ENCODE measurements at regions of chr2 and their contacts with region 1.

Region 1: DNA sequence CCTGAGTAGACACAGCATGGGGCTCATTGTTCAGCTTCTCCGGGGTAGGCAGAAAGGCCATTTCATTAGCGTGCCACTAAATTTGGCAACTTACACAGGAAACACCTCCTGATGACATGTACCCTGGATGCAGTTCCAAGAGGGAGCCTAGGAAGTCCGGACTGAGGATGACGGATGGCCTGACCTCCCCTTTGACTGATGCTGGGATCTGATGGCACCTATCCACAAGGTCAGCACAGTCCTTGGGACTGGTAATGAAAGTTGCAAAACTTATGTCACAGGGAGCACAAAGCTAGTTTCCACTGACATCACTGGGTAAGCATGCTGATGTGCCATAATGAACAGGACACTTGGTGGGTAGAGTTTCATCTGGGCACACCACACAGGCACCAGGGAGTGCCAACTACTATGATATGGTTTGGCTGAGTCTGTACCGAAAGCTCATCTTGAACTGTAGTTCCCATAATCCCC is 126.7 kb upstream of the ARL4C start:
- DNase-seq: no peak
- H3K4me3 ChIP-seq: no peak overlapping the region
- H3K27ac ChIP-seq: no peak overlapping the region
- H3K4me1 ChIP-seq: no peaks in the 10 kb centered on the region
- H3K27me3 ChIP-seq: no peaks in the 10 kb centered on the region
- CTCF ChIP-seq: no peak
- EP300 ChIP-seq: no peak
- POLR2A ChIP-seq: no peak
- RAD21 ChIP-seq: no peak

Region 2: DNA sequence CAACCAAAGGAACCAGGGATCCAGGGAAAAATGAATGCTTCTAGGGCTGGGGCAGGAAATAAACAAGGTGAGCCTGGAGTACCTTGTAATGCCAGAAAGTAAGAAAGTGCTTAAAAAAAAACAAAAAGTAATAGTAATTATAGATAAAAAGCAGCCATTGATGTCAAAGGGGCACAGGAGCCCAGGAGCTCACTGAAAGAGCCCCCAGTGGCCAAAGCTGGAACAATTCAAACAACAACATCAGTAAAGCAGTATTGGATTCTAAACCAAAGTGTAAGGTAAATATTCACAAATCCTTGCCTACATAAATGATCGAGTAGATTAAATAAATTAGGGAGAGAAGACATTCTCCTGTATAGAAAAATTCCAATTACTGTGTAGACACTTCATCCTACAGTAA is 12.3 kb before region 1 on chr2:
- CTCF ChIA-PET with region 1: interaction called, 18 read pairs
- POLR2A ChIA-PET with region 1: no interaction called
- DNase-seq: no peak
- H3K4me3 ChIP-seq: no peak overlapping the region
- H3K27ac ChIP-seq: no peak overlapping the region
- H3K4me1 ChIP-seq: no peaks in the 10 kb centered on the region; a peak in 1 of 7 replicates
- H3K27me3 ChIP-seq: no peaks in the 10 kb centered on the region
- CTCF ChIP-seq: peak; percentile 22 to 49 (median 29); a peak in 3 of 4 replicates
- EP300 ChIP-seq: no peak
- POLR2A ChIP-seq: no peak
- RAD21 ChIP-seq: peak; percentile 33 to 47; a peak in 3 of 4 replicates

Region 3: DNA sequence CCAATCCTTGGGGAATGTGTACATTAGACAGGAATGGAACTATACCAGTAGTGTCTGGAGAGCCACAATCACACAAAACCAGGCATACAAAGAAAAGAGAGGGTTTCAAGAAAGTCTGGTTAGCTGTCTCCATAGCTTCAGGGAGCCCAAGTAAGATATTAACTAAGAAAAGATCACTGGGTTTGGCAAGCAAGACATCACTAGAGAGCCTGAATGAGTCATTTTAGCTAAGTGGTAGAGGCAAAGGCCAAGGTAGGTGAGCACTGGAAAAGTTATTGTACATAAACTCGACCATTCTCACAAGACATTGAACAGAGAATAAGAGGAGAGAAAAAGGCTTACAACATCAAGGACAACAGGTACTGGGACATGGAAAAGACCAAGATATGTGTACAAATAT is 17.1 kb after region 1 on chr2:
- CTCF ChIA-PET with region 1: no interaction called
- POLR2A ChIA-PET with region 1: no interaction called
- DNase-seq: no peak
- H3K4me3 ChIP-seq: no peak overlapping the region
- H3K27ac ChIP-seq: no peak overlapping the region
- H3K4me1 ChIP-seq: peaks cover 0 to 4% (median 0%) of the 10 kb centered on the region in 4 experiments; a peak in 1 of 7 replicates
- H3K27me3 ChIP-seq: no peaks in the 10 kb centered on the region
- CTCF ChIP-seq: no peak
- EP300 ChIP-seq: no peak
- POLR2A ChIP-seq: no peak
- RAD21 ChIP-seq: no peak

Region 4: DNA sequence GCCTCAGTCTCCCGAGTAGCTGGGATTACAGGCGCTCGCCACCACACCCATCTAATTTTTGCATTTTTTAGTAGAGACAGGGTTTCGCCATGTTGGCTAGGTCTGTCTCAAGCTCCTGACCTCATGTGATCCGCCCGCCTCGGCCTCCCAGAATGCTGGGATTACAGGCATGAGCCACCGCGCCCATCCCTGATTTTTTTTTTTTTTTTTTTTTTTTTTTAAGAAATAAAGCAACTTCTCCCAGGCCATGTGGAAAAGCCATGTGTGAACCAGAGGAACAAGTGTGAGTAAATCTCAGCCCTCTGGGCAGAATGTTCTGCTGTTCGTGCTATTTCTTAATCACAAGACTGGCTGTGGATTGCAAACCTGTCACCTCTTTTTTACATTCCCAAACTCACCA is 321.9 kb after region 1 on chr2:
- CTCF ChIA-PET with region 1: no interaction called
- POLR2A ChIA-PET with region 1: no interaction called
- DNase-seq: no peak
- H3K4me3 ChIP-seq: no peak overlapping the region
- H3K27ac ChIP-seq: no peak overlapping the region
- H3K4me1 ChIP-seq: peaks cover 0 to 8% (median 3%) of the 10 kb centered on the region in 4 experiments; a peak in 2 of 7 replicates
- H3K27me3 ChIP-seq: peaks cover 2 to 8% (median 6%) of the 10 kb centered on the region in 4 experiments; a peak in 5 of 7 replicates
- CTCF ChIP-seq: no peak
- EP300 ChIP-seq: no peak
- POLR2A ChIP-seq: no peak
- RAD21 ChIP-seq: no peak